Left lung (tissue), 14 donors: ENCODE measurements at regions of chr3 and their contacts with region 1.

Region 1: GRCh38 chr3:9302425-9303181 is 53.2 kb upstream of the SRGAP3 start:
- DNase-seq: peak; percentile 80 to 91 (median 86)
- ATAC-seq: peak; percentile 100
- H3K4me3 ChIP-seq: no peak overlapping the region
- H3K27ac ChIP-seq: no peak overlapping the region
- H3K4me1 ChIP-seq: peaks cover 4% of the 10 kb centered on the region in 2 donors
- H3K27me3 ChIP-seq: peaks cover 0 to 7% of the 10 kb centered on the region in 2 donors
- CTCF ChIP-seq: peak; percentile 83 to 86

Region 2: GRCh38 chr3:8970971-8971589 is 331.5 kb before region 1 on chr3:
- intact Hi-C with region 1: loop called (anchors 5 to 10 kb)
- DNase-seq: peak in 2 of 4 donors; percentile 59 to 81
- ATAC-seq: peak; percentile 93
- H3K4me3 ChIP-seq: no peak overlapping the region
- H3K27ac ChIP-seq: no peak overlapping the region
- H3K4me1 ChIP-seq: no peaks in the 10 kb centered on the region
- H3K27me3 ChIP-seq: peaks cover 0 to 14% of the 10 kb centered on the region in 2 donors
- CTCF ChIP-seq: peak; percentile 94 to 97

Region 3: GRCh38 chr3:8987645-8988383 is 314.8 kb before region 1 on chr3:
- intact Hi-C with region 1: loop called in 1 of 2 experiments (anchors 5 kb)
- DNase-seq: peak in 2 of 4 donors; percentile 51 to 81
- ATAC-seq: peak; percentile 92
- H3K4me3 ChIP-seq: no peak overlapping the region
- H3K27ac ChIP-seq: no peak overlapping the region
- H3K4me1 ChIP-seq: no peaks in the 10 kb centered on the region
- H3K27me3 ChIP-seq: no peaks in the 10 kb centered on the region
- CTCF ChIP-seq: peak; percentile 56 to 71

Region 4: DNA sequence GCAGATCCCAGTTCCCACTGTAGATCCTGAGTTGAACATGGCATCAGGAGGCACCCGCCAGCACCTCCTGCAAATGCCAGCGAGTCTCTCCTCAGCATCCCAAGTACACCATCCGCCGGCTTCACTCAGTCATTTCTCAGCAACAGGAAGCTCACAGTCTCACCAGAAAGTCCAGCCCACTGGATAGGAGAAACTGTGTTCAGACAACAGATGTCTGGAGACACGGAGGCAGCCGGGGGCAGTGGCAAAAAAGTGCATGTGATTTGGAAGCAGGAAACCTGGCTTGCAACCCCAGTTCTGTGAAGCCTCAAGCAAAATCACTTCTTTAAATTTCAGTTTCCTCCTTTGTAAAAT is 121.9 kb before region 1 on chr3:
- intact Hi-C with region 1: no loop called
- DNase-seq: no peak
- ATAC-seq: no peak
- H3K4me3 ChIP-seq: no peak overlapping the region
- H3K27ac ChIP-seq: no peak overlapping the region
- H3K4me1 ChIP-seq: peaks cover 0 to 6% of the 10 kb centered on the region in 2 donors
- H3K27me3 ChIP-seq: no peaks in the 10 kb centered on the region
- CTCF ChIP-seq: no peak

Region 5: GRCh38 chr3:9214599-9214998 is 88.0 kb before region 1 on chr3:
- intact Hi-C with region 1: no loop called
- DNase-seq: no peak
- ATAC-seq: peak; percentile 56
- H3K4me3 ChIP-seq: no peak overlapping the region
- H3K27ac ChIP-seq: peak overlapping the region in 1 of 2 donors; percentile 35
- H3K4me1 ChIP-seq: no peaks in the 10 kb centered on the region
- H3K27me3 ChIP-seq: no peaks in the 10 kb centered on the region
- CTCF ChIP-seq: no peak